ENCODE measurements at regions of chr9 and their contacts with region 1.

Region 1: DNA sequence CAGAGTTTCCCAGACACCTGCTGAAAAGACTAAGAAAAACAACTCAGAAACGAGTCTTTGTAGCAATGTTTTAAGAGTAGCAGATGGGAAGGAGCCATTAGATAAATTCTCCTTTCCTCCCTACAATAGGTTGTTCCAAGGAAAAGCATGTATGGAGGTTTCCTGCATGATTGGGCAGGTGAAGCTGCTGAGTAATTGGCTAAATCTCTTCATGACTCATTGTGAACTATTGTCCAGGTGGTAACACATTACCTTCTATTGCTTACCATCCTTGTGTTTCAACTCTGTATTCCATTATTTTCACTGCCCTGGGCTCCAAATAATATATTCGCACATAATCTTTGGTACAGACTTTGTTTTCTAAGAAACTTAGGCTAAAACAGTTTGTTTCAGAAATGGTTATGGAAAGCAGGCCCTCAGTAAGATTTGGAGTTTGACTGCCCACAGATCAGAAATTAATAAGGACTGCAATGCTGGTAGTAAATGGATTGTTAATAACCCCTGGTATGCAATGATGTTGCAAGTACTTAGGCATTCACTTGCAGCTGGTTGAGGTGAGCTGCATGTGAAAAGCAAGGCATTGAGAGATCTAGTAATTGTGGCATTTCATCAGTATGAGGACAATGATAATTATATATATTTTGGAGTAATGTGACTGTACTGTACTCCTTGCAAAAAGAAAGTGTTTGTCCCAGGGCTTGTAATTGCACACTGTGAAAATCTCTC is 281.4 kb upstream of the VLDLR start:
- DNase-seq: no peak

Region 2: DNA sequence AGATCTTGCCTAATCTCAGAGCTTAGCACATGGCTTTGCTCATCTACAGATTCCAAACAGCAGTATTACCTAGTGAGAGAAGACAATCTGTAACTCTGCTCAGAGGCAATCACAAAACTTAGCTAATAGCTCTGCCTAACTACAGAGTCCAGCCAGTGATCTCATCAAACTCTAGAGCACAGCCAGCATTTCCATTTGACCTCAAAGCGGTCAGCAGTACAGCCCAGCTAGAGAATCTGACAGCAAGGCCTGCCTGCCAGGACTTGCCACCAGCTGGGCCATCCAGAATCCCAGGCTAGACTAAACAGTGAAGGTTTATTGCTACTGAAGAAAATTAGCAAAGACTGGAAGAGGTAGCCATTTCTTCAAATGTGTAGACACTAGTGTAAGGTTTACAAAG is 63.5 kb after region 1 on chr9:
- intact Hi-C with region 1: loop called (anchors 10 kb)
- DNase-seq: no peak

Region 3: DNA sequence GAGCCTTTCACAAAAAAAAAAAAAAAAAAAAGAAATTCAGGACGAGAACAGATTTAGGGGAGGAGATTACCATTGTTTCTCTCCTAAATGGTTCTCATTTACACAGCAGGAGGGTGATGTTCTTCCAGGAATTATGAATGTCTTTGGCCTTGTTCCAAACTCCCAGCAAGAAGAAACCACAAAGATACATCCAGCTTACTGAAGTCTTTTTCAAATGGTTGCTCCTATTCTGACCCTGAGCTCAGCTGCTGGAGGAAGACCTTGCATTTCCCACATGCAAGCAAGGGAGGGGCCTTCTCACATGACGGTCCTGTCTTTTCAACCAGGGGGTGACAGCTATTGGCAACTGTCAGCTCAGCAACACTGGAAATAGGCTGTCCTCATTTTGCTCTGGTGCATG is 78.4 kb after region 1 on chr9:
- intact Hi-C with region 1: no loop called
- DNase-seq: no peak

Region 4: GRCh38 chr9:2662496-2662895 is 322.3 kb after region 1 on chr9:
- intact Hi-C with region 1: loop called (anchors 10 kb)
- DNase-seq: no peak

Region 5: DNA sequence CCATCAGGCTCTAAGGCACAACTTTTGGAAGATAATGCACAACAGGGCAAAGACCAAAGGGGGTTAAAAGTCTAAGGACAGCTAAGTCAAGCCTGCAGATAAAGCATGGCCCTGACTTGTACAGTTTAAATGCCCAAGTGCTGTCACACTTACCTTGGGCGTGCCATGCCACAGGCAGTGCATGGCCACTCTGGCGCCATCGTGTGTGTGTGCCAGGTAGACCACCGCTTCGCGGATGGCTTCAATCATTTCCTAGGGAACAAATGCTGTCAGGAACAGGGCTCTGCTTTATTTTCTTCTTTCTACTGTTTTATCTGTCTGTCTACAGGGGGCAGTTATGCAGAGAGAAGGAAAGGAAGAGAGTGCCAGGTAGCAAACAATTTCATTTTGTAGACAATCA is 484.4 kb after region 1 on chr9:
- intact Hi-C with region 1: loop called (anchors 10 kb)
- DNase-seq: no peak